ENCODE measurements at regions of chr14 and their contacts with region 1.

Region 1: GRCh38 chr14:99393047-99393655 is 87.5 kb downstream of the SETD3 start:
- DNase-seq: peak; percentile 44
- H3K4me3 Mint-ChIP-seq: no peak overlapping the region
- H3K27ac Mint-ChIP-seq: no peak overlapping the region
- H3K4me1 Mint-ChIP-seq: peaks cover 14% of the 10 kb centered on the region
- H3K27me3 Mint-ChIP-seq: no peaks in the 10 kb centered on the region

Region 2: DNA sequence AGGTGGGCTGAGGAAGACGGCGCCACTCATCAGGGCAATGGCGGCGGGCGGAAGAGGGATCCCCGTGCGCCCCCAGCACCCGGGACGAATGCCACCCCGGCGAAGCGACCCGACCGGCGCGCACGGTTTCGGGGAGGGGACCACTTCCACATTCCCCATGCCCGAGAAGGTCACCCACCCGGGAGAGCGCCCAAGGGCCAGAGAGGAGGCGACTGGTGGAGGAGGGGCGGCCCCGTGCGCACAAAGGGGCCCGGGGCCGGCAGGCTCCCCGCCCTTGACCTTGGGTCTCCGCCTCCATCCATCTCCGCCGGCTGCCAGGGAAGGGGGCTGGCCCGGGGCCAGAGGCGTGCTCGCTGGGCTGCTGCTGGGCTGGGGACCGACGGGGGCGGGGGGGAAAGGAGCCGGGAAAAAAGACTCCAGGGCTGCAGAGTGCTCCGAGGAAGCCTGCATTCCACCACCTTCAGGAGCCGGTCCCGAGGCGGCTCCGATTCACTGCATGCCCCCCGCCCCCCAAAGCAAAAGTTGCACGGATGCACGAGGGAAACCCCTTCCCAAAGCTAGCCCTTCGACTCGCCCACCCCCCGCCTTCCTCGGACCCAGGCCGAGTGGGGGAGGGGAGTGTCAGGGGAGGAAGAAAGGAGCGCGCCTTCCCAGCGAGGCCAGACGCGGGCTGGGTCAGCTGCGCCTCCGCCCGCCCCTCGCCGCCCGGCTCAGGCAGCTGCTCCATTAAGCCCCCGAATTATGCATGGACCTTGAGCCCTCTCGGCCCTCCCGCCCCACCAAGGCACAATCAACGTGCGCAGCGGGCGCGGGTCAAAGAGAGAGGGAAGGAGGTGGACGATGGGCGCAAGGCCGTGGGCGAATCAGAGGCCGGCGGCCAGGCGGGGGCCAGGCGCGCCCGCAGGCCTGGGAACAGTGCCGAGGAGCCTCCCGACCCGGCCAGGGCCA is 147.3 kb before region 1 on chr14:
- CTCF ChIA-PET with region 1: no interaction called
- POLR2A ChIA-PET with region 1: no interaction called
- DNase-seq: no peak
- H3K4me3 Mint-ChIP-seq: peak overlapping the region; percentile 79
- H3K27ac Mint-ChIP-seq: peak overlapping the region; percentile 99
- H3K4me1 Mint-ChIP-seq: peaks cover 79% of the 10 kb centered on the region
- H3K27me3 Mint-ChIP-seq: no peaks in the 10 kb centered on the region

Region 3: DNA sequence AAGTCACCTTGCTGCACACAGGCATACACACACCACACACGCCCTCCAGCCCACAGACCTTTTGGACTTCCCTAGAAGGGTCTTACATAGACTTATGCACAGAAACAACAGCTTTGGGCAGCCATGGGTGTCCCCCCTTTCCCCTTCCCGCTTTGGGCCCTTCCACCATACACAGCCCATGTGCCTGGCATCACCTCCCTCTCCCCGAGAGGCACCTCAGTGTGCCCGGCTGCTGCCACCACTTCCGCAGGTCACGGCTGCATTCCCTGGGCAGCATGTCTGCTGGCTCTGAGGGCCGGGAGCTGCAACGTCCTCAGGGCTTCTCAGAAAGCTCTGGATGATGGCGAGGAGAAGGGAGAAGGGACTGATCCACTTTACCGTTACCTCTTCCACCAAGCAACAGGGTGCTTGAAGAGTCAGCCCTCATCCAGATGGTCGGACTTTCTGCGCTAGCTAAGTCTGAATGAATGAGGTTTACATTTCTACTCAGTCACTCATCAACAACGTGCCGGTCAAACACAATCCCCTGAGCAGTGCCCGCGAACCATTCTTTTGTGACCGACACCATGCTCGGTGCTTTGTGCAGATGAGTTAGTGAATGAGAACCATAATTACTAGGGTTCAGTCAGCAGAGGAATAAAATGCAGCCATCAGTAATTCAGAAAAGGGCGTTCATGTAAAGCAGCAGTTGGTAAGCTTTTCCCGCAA is 48.9 kb before region 1 on chr14:
- CTCF ChIA-PET with region 1: no interaction called
- POLR2A ChIA-PET with region 1: no interaction called
- DNase-seq: no peak
- H3K4me3 Mint-ChIP-seq: no peak overlapping the region
- H3K27ac Mint-ChIP-seq: no peak overlapping the region
- H3K4me1 Mint-ChIP-seq: peaks cover 2% of the 10 kb centered on the region
- H3K27me3 Mint-ChIP-seq: peaks cover 5% of the 10 kb centered on the region

Region 4: DNA sequence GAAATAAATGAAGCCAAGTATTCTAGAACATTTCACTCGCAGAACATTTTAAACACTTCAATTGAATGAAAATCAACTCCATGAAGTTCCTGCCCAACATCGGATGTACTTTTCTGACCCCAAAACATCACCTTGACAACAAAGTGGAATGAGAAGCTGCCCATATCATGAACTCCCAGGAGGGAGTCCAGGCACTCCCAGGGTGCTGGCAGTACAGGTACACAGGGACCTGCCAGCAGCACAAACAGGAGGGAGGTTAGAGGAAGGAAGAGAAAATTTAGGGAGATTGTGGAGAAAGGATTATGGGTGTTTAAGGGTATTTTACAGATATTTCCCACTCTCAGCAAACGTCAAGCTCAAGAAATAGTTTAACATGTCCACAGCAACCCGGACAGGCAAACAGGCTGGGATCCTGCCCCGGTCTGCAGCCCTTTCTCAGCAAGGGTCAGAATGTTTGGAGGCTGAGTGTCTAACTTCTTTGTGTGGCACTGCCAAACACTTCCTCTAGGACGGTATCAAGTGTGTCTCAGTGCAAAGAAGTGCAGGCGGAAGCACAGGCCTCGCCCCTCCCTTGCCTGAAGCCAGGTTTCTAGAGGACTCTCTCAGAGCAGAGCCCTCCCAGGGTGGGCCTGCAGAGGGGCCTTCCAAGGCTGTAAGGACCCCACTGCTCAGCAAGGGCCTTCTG is 15.3 kb after region 1 on chr14:
- CTCF ChIA-PET with region 1: interaction called, 94 read pairs
- POLR2A ChIA-PET with region 1: interaction called, 3 read pairs
- DNase-seq: no peak
- H3K4me3 Mint-ChIP-seq: no peak overlapping the region
- H3K27ac Mint-ChIP-seq: no peak overlapping the region
- H3K4me1 Mint-ChIP-seq: peaks cover 16% of the 10 kb centered on the region
- H3K27me3 Mint-ChIP-seq: no peaks in the 10 kb centered on the region

Region 5: DNA sequence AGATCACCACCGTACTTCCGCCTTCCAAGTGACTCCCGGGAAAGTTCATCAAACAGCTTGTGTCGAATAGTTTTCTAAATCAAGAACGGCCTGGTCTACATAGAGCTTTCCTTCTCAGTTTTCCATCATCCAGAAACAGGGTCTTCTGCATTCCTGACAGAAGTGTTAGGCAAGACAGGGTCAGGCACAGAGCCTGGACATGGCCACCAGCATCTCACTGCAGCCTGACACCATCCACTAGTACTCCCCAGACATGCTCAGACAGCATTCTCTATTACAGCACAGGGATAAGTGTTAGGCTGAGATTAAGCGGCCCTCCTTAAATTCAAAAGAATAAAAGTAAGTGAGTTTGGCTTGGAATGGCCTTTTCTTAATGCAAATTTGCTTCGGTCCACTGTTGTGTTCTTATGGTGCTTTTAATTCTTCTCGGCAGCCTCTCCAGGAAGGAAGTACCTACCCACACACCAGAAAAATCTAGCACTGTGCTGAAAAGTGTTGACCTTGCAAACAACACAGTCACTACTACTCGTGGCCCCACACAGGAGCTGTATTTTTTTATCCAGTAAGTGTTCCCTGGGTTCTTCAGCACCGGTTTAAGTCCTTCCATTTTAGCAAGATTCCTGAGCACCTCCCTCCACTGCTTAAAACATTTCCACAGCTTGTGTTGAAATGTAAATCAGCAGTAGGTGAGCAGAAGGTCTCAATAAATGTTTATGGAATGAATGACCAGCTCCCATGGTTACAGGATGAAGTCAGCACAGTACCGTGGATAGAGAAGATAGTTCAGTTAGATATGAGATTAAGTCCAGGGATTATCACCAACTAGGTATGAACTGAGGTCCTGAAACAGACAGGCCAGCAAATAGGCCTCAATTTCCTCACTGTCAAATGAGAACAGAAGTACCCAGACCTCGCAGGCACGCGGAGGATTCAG is 43.4 kb after region 1 on chr14:
- CTCF ChIA-PET with region 1: interaction called, 10 read pairs
- POLR2A ChIA-PET with region 1: no interaction called
- DNase-seq: peak; percentile 33
- H3K4me3 Mint-ChIP-seq: no peak overlapping the region
- H3K27ac Mint-ChIP-seq: peak overlapping the region; percentile 85
- H3K4me1 Mint-ChIP-seq: peaks cover 40% of the 10 kb centered on the region
- H3K27me3 Mint-ChIP-seq: no peaks in the 10 kb centered on the region